ENCODE measurements at regions of chr10 and their contacts with region 1.

Region 1: GRCh38 chr10:93680412-93681047 is 21.9 kb downstream of the FRA10AC1 start:
- DNase-seq: no peak
- H3K4me3 ChIP-seq: no peak overlapping the region
- H3K27ac ChIP-seq: no peak overlapping the region
- H3K4me1 ChIP-seq: no peaks in the 10 kb centered on the region
- H3K27me3 ChIP-seq: no peaks in the 10 kb centered on the region
- CTCF ChIP-seq: peak in 2 of 3 donors; percentile 24 to 26
- POLR2A ChIP-seq: no peak

Region 2: GRCh38 chr10:93620925-93621324 is 59.6 kb before region 1 on chr10:
- intact Hi-C with region 1: loop called (anchors 2 kb)
- DNase-seq: no peak
- H3K4me3 ChIP-seq: no peak overlapping the region
- H3K27ac ChIP-seq: no peak overlapping the region
- H3K4me1 ChIP-seq: no peaks in the 10 kb centered on the region
- H3K27me3 ChIP-seq: no peaks in the 10 kb centered on the region
- CTCF ChIP-seq: no peak
- POLR2A ChIP-seq: no peak

Region 3: GRCh38 chr10:93722501-93722900 is 42.0 kb after region 1 on chr10:
- intact Hi-C with region 1: no loop called
- DNase-seq: no peak
- H3K4me3 ChIP-seq: no peak overlapping the region
- H3K27ac ChIP-seq: no peak overlapping the region
- H3K4me1 ChIP-seq: no peaks in the 10 kb centered on the region
- H3K27me3 ChIP-seq: peaks cover 0 to 3% of the 10 kb centered on the region in 2 donors
- CTCF ChIP-seq: no peak
- POLR2A ChIP-seq: no peak